K562 (cell line): ENCODE measurements at regions of chr10 and their contacts with region 1.

Region 1: GRCh38 chr10:7410862-7411670 is at the start of gene SFMBT2:
- DNase-seq: peak; percentile 70 to 83 (median 80)
- ATAC-seq: peak; percentile 70
- H3K4me3 ChIP-seq: peak within 1 kb of the TSS; percentile 85
- H3K27ac ChIP-seq: peak within 1 kb of the TSS; percentile 83
- H3K4me1 ChIP-seq: peaks cover 18 to 34% of the 10 kb centered on the region in 2 experiments
- H3K27me3 ChIP-seq: no peaks in the 10 kb centered on the region
- CTCF ChIP-seq: peak in 2 of 3 experiments; percentile 4 to 9; a peak in 1 of 6 replicates
- EP300 ChIP-seq: no peak
- POLR2A ChIP-seq: no peak
- RAD21 ChIP-seq: no peak
- polyA plus RNA-seq, gene SFMBT2: 1.2 TPM

Region 2: GRCh38 chr10:6678211-6678803 is 732.8 kb before region 1 on chr10:
- CTCF ChIA-PET with region 1: no interaction called
- POLR2A ChIA-PET with region 1: no interaction called
- in situ Hi-C with region 1: loop called (anchors 25 kb)
- intact Hi-C with region 1: loop called (anchors 5 kb)
- DNase-seq: peak; percentile 49 to 68 (median 50)
- ATAC-seq: peak; percentile 81
- H3K4me3 ChIP-seq: no peak overlapping the region
- H3K27ac ChIP-seq: no peak overlapping the region
- H3K4me1 ChIP-seq: no peaks in the 10 kb centered on the region
- H3K27me3 ChIP-seq: peaks cover 3 to 16% of the 10 kb centered on the region in 2 experiments; a peak in 3 of 5 replicates
- CTCF ChIP-seq: peak; percentile 75 to 83 (median 83)
- EP300 ChIP-seq: no peak
- POLR2A ChIP-seq: no peak
- RAD21 ChIP-seq: peak; percentile 63 to 83

Region 3: GRCh38 chr10:6920072-6921019 is 490.7 kb before region 1 on chr10:
- CTCF ChIA-PET with region 1: interaction called, 11 read pairs
- POLR2A ChIA-PET with region 1: no interaction called
- in situ Hi-C with region 1: no loop called
- intact Hi-C with region 1: loop called (anchors 2 kb)
- DNase-seq: peak; percentile 87 to 92 (median 88)
- ATAC-seq: peak; percentile 95
- H3K4me3 ChIP-seq: peak overlapping the region; percentile 5; the same call in 1 of the 2 replicates
- H3K27ac ChIP-seq: peak overlapping the region; percentile 75
- H3K4me1 ChIP-seq: peaks cover 2 to 17% of the 10 kb centered on the region in 2 experiments; a peak in 4 of 5 replicates
- H3K27me3 ChIP-seq: no peaks in the 10 kb centered on the region; a peak in 1 of 5 replicates
- CTCF ChIP-seq: peak; percentile 79 to 92 (median 84)
- EP300 ChIP-seq: peak; percentile 99
- POLR2A ChIP-seq: no peak
- RAD21 ChIP-seq: peak; percentile 86 to 88

Region 4: DNA sequence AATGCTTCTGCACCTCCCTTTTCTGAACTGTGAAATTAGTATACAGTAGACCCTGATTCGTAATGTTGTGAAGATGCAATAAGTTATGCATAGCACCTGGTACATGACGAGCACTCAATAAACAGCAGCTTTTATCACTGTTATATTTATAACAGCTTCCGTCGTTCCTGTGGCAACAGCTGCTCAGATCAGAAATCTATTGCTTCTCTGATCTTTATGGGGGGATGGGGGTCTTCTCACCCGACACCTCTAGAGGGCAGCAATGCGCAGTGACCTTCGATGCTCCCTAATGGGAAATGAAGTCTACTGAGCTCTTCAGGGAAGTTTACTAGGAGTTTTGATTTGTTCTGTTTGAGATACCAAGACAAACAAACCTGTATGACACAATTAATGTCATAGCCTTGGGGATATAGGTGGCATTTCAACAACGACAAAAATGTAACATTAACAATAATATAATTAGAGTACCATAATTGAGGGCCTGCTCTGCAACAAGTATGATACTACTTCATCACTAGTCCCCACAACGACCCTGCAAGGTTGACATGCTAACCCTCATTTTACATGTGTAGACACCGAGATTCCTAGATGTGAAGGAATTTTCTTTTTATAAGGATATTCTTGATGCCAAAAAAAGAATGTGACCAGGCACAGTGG is 289.8 kb before region 1 on chr10:
- CTCF ChIA-PET with region 1: no interaction called
- POLR2A ChIA-PET with region 1: no interaction called
- in situ Hi-C with region 1: loop called (anchors 5 kb)
- intact Hi-C with region 1: loop called (anchors 5 kb)
- DNase-seq: peak; percentile 75 to 79 (median 76)
- ATAC-seq: peak; percentile 88
- H3K4me3 ChIP-seq: no peak overlapping the region
- H3K27ac ChIP-seq: no peak overlapping the region
- H3K4me1 ChIP-seq: peaks cover 0 to 13% of the 10 kb centered on the region in 2 experiments; a peak in 2 of 5 replicates
- H3K27me3 ChIP-seq: no peaks in the 10 kb centered on the region
- CTCF ChIP-seq: peak; percentile 70 to 76 (median 74)
- EP300 ChIP-seq: no peak
- POLR2A ChIP-seq: no peak
- RAD21 ChIP-seq: peak; percentile 37 to 68

Region 5: GRCh38 chr10:7251696-7252465 is 159.2 kb before region 1 on chr10:
- CTCF ChIA-PET with region 1: no interaction called
- POLR2A ChIA-PET with region 1: no interaction called
- in situ Hi-C with region 1: no loop called
- intact Hi-C with region 1: loop called (anchors 2 kb)
- DNase-seq: peak; percentile 64 to 95 (median 79)
- ATAC-seq: peak; percentile 99
- H3K4me3 ChIP-seq: no peak overlapping the region
- H3K27ac ChIP-seq: peak overlapping the region; percentile 81
- H3K4me1 ChIP-seq: peaks cover 7 to 20% of the 10 kb centered on the region in 2 experiments; a peak in 3 of 5 replicates
- H3K27me3 ChIP-seq: no peaks in the 10 kb centered on the region
- CTCF ChIP-seq: no peak
- EP300 ChIP-seq: peak; percentile 96
- POLR2A ChIP-seq: no peak
- RAD21 ChIP-seq: peak in 1 of 2 experiments; percentile 37; a peak in 1 of 4 replicates

Region 6: GRCh38 chr10:7260412-7260900 is 150.6 kb before region 1 on chr10:
- CTCF ChIA-PET with region 1: interaction called, 4 read pairs
- POLR2A ChIA-PET with region 1: no interaction called
- in situ Hi-C with region 1: loop called (anchors 10 kb)
- intact Hi-C with region 1: no loop called
- DNase-seq: peak; percentile 65 to 75 (median 70)
- ATAC-seq: peak; percentile 92
- H3K4me3 ChIP-seq: no peak overlapping the region
- H3K27ac ChIP-seq: no peak overlapping the region
- H3K4me1 ChIP-seq: peaks cover 0 to 6% of the 10 kb centered on the region in 2 experiments; a peak in 3 of 5 replicates
- H3K27me3 ChIP-seq: no peaks in the 10 kb centered on the region
- CTCF ChIP-seq: peak; percentile 37 to 72 (median 70); a peak in 5 of 6 replicates
- EP300 ChIP-seq: no peak
- POLR2A ChIP-seq: no peak
- RAD21 ChIP-seq: peak; percentile 53 to 71

Region 7: GRCh38 chr10:7318836-7319235 is 92.2 kb before region 1 on chr10:
- CTCF ChIA-PET with region 1: no interaction called
- POLR2A ChIA-PET with region 1: no interaction called
- in situ Hi-C with region 1: no loop called
- intact Hi-C with region 1: loop called (anchors 10 kb)
- DNase-seq: no peak
- ATAC-seq: no peak
- H3K4me3 ChIP-seq: no peak overlapping the region
- H3K27ac ChIP-seq: no peak overlapping the region
- H3K4me1 ChIP-seq: peaks cover 3 to 8% of the 10 kb centered on the region in 2 experiments; a peak in 2 of 5 replicates
- H3K27me3 ChIP-seq: no peaks in the 10 kb centered on the region
- CTCF ChIP-seq: no peak
- EP300 ChIP-seq: no peak
- POLR2A ChIP-seq: no peak
- RAD21 ChIP-seq: no peak